ENCODE measurements at regions of chr1 and their contacts with region 1.

Region 1: DNA sequence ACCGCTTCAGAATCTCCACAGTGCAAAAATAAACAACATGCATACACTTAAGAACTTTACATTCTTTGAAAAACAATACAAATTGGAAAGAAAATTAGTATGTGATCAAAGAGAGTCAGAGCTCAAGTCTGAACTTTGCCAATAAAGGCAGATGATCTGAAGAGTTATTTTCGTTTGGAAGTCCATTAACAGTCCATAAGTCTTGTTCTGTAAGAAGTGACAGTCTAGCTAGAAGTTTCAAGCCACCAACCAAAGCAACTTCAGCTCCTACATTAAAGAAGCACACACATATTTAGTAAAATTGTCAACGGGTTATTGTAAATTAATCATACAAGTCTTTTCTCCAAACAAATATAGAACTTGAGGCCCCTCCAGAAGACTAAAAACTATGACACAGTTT is 20.7 kb downstream of the ANGEL2 start:
- DNase-seq: no peak
- ATAC-seq: no peak
- H3K4me3 ChIP-seq: no peak overlapping the region
- H3K27ac ChIP-seq: no peak overlapping the region
- H3K4me1 ChIP-seq: no peaks in the 10 kb centered on the region
- H3K27me3 ChIP-seq: no peaks in the 10 kb centered on the region
- CTCF ChIP-seq: no peak
- EP300 ChIP-seq: no peak
- POLR2A ChIP-seq: no peak
- RAD21 ChIP-seq: no peak

Region 2: GRCh38 chr1:212665241-212666115 is 329.4 kb before region 1 on chr1:
- CTCF ChIA-PET with region 1: interaction called, 8 read pairs
- POLR2A ChIA-PET with region 1: no interaction called
- in situ Hi-C with region 1: no loop called
- intact Hi-C with region 1: loop called (anchors 2 kb)
- DNase-seq: peak; percentile 85 to 88 (median 86)
- ATAC-seq: peak; percentile 99
- H3K4me3 ChIP-seq: peak overlapping the region; percentile 40
- H3K27ac ChIP-seq: no peak overlapping the region
- H3K4me1 ChIP-seq: peaks cover 3 to 11% of the 10 kb centered on the region in 2 experiments; a peak in 4 of 5 replicates
- H3K27me3 ChIP-seq: peaks cover 13 to 35% of the 10 kb centered on the region in 2 experiments; a peak in 4 of 5 replicates
- CTCF ChIP-seq: peak; percentile 94 to 95 (median 95)
- EP300 ChIP-seq: no peak
- POLR2A ChIP-seq: no peak
- RAD21 ChIP-seq: peak; percentile 97 to 98

Region 3: DNA sequence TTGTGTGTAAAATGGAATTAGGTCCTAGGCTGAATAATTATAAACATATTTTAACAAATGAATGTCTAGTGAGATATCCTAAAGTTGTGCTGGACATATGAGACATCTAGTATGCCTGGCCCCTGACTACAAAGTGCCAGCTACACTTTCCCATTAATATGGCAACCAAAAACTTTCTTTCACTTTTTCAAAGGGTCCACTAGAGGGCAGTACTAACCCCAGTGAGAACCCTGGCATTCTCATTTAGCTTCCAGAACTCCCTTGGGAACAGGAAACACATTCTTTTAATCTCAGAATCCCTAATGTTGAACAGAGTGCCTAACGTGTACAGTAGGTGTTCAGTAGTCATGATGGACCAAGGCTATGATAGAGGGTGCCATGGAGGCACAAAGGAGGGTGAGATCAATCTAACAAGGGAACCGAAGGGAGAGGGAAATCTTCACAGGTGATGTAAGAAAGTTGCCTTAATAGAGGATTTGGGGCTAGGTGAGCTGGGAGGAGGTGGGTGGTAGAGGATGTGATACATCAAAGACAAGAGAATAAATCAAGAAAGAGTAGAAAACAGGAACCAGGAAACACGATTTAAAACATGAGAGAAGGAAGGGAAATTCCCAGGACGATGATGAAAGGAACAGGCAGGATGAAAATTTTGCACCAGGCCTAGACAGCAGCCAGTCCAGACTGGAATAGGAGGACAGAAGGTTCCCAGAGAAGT is 244.9 kb before region 1 on chr1:
- CTCF ChIA-PET with region 1: interaction called, 4 read pairs
- POLR2A ChIA-PET with region 1: no interaction called
- in situ Hi-C with region 1: no loop called
- intact Hi-C with region 1: loop called (anchors 2 kb)
- DNase-seq: peak; percentile 64 to 68 (median 67)
- ATAC-seq: peak; percentile 86
- H3K4me3 ChIP-seq: no peak overlapping the region
- H3K27ac ChIP-seq: no peak overlapping the region
- H3K4me1 ChIP-seq: peaks cover 0 to 2% of the 10 kb centered on the region in 2 experiments; a peak in 1 of 5 replicates
- H3K27me3 ChIP-seq: no peaks in the 10 kb centered on the region
- CTCF ChIP-seq: peak; percentile 71 to 83 (median 82)
- EP300 ChIP-seq: 0 out of 2 replicates have a peak, but pooled peaks have one; percentile 28
- POLR2A ChIP-seq: no peak
- RAD21 ChIP-seq: peak; percentile 54 to 77

Region 4: DNA sequence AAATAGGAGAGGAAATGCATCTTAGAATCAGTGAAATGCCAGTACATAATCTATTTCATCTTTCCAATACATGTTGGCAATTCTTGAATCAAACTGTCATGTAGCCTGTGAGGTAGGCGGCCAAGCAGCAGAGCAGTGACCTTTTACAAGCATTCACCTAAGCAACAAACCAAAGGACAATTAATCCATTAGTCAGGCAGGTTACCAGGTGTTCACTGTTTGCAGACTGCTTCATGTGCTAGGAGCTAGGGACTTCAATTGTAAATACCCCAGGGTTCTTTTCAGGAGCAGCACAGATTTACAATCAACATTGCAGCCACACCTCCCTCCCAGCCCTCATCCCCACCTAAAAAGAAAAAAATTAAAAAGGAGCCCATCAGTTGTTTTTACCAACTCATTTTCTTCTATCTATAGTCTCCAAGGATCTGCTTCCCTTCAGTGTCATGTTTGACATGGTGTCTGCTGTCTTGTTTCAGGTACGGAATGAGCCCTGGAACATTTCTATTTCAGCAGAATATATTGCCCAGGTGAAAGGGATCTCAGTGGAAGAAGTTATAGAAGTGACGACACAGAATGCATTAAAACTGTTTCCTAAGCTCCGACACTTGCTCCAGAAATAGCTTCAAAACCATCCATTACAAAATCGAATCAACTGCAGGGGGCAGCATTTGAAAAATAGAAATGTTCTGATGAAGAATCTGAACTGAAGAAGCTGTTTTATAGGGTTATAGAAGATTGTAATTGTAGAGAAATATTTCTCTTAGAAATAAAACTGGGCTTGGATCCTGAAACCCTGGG is 180.2 kb before region 1 on chr1:
- CTCF ChIA-PET with region 1: interaction called, 15 read pairs
- POLR2A ChIA-PET with region 1: no interaction called
- in situ Hi-C with region 1: no loop called
- intact Hi-C with region 1: loop called (anchors 2 kb)
- DNase-seq: peak in 1 of 4 experiments; percentile 28
- ATAC-seq: no peak
- H3K4me3 ChIP-seq: no peak overlapping the region
- H3K27ac ChIP-seq: no peak overlapping the region
- H3K4me1 ChIP-seq: no peaks in the 10 kb centered on the region
- H3K27me3 ChIP-seq: no peaks in the 10 kb centered on the region
- CTCF ChIP-seq: peak in 2 of 3 experiments; percentile 39 to 49; a peak in 2 of 6 replicates
- EP300 ChIP-seq: no peak
- POLR2A ChIP-seq: no peak
- RAD21 ChIP-seq: peak; percentile 21 to 61; a peak in 3 of 4 replicates

Region 5: DNA sequence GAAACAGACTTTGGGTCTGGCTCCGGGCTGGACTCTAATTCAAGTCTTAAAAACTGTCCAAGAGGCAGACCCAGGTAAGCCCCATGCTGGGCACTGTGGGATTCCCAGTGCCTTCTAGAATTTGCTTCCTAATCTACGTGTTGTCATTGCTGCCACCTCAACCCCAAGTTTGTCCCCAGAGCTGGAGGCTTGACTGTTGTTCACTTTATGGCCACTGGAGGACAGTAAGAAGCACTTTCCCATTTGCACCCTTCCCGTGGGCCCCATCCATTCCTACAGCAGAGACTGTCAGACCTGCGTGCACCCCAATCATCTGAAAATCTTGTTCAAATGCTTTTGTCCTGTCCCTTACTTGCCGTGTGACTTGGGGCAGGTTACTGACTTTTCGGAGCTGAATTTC is 74.0 kb before region 1 on chr1:
- CTCF ChIA-PET with region 1: interaction called, 9 read pairs
- POLR2A ChIA-PET with region 1: no interaction called
- in situ Hi-C with region 1: no loop called
- intact Hi-C with region 1: loop called (anchors 1 kb)
- DNase-seq: peak; percentile 53 to 75 (median 72)
- ATAC-seq: peak; percentile 79
- H3K4me3 ChIP-seq: no peak overlapping the region
- H3K27ac ChIP-seq: no peak overlapping the region
- H3K4me1 ChIP-seq: peaks cover 7% of the 10 kb centered on the region in 2 experiments; a peak in 3 of 5 replicates
- H3K27me3 ChIP-seq: peaks cover 15 to 52% of the 10 kb centered on the region in 2 experiments
- CTCF ChIP-seq: peak; percentile 77 to 88 (median 84)
- EP300 ChIP-seq: no peak
- POLR2A ChIP-seq: no peak
- RAD21 ChIP-seq: peak; percentile 64 to 86

Region 6: GRCh38 chr1:213211201-213211600 is 216.3 kb after region 1 on chr1:
- CTCF ChIA-PET with region 1: no interaction called
- POLR2A ChIA-PET with region 1: no interaction called
- in situ Hi-C with region 1: no loop called
- intact Hi-C with region 1: no loop called
- DNase-seq: no peak
- ATAC-seq: no peak
- H3K4me3 ChIP-seq: no peak overlapping the region
- H3K27ac ChIP-seq: no peak overlapping the region
- H3K4me1 ChIP-seq: no peaks in the 10 kb centered on the region
- H3K27me3 ChIP-seq: no peaks in the 10 kb centered on the region
- CTCF ChIP-seq: no peak
- EP300 ChIP-seq: no peak
- POLR2A ChIP-seq: no peak
- RAD21 ChIP-seq: no peak

Measured in K562 (cell line).